ENCODE measurements at regions of chr18 and their contacts with region 1.

Region 1: DNA sequence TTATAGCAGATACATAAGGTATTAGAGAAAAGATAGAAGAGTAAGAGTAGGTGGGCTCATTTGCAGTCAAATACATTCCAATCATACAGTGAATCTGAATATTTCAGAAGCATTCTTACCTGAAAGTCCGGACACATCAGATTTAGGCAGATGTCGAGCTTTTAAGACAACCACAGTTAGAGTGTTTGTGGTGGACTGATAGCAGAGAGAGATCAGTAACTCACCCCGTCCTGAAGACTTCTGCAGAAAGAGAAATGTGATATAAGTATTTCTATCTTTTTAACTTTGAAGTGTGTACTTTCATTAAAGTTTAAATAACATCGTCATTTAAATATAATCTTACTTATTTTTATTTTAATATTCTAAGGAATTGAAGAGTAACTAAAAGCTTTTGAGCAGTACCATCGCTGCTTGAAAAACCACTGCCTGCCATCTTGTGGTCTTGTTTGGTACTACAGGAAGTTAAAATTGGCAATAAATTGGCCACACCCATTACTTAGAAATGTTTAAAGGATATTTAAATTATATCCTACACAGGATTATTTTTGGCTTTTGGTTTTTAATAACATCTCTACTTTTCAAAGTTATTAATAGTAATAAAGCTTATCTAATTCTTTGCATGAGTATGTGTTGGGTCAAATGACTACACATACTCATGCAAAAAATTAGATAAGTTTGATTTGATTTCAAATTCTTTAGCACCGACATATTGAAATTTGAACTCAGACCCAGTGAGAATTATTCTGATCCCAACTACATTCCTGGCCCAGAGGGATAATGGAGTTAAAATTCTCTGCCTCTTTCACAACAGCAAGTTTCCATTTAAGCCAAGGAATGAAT is 5.5 kb downstream of the SYT4 start:
- DNase-seq: peak; percentile 17
- CTCF ChIP-seq: peak; percentile 81

Region 2: DNA sequence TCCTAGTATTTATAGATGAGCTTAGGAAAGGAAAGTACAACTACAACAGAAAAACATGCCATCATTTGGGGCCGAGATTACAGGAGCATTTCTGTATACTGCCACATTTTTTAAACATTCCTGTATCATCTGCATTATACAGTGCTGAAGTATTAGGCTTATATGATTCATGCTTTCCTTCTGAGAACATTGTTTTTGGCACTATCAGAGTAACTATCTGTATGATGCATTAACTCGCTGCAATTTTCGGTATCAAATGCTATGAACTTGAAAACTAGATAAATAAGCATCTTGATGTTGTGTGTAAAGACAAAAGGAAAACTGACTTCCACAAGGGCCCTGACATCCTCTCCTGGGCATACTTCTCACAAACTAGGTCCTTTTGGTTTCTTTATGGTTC is 258.3 kb before region 1 on chr18:
- CTCF ChIA-PET with region 1: no interaction called
- POLR2A ChIA-PET with region 1: no interaction called
- DNase-seq: no peak
- CTCF ChIP-seq: no peak

Region 3: DNA sequence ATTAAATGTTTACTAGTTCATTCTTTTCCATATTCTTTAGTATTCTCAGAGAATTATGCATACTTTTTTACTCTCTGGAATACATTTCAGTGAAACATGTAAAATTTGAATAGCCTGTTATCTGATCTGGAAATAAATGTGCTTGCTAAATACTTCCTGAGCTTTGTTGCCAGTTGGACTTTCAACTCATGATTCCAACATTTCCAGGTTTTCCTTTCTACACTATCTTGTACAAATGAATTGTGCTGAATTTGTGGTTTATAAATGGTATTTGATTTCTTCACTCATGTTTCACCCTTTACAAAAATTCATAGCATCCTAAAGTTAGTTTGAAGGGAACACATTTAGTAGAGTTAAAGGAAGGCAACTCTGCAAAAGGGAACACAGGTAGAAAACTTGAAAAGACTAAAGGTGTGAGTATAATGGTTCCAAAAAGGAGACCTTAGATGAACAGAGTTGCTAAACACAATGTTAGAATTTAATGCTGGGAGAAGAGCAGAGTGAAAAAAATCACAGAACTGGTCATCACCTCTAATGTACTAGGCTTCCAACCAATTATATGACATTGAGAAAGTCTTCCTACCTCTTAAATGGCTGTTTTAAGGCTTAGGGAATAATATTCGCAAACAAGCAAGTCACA is 23.1 kb before region 1 on chr18:
- CTCF ChIA-PET with region 1: interaction called, 24 read pairs
- POLR2A ChIA-PET with region 1: no interaction called
- DNase-seq: no peak
- CTCF ChIP-seq: no peak

Region 4: GRCh38 chr18:43757273-43757672 is 485.5 kb after region 1 on chr18:
- CTCF ChIA-PET with region 1: no interaction called
- POLR2A ChIA-PET with region 1: no interaction called
- DNase-seq: no peak
- CTCF ChIP-seq: no peak